Heart left ventricle (tissue), 16 donors: ENCODE measurements at regions of chr19 and their contacts with region 1.

Region 1: GRCh38 chr19:13861732-13862531 is 15.0 kb upstream of the NANOS3 start:
- DNase-seq: peak; percentile 94 to 96 (median 95)
- ATAC-seq: peak; percentile 93 to 95 (median 94)
- H3K4me3 ChIP-seq: peak overlapping the region in 11 of 12 donors; percentile 23 to 64 (median 50)
- H3K27ac ChIP-seq: peak overlapping the region; percentile 81 to 97 (median 94)
- H3K4me1 ChIP-seq: peaks cover 0 to 36% (median 20%) of the 10 kb centered on the region in 12 donors
- H3K27me3 ChIP-seq: peaks cover 0 to 15% (median 0%) of the 10 kb centered on the region in 9 donors
- CTCF ChIP-seq: peak; percentile 95 to 100 (median 98)
- POLR2A ChIP-seq: peak in 1 of 2 donors; percentile 49

Region 2: GRCh38 chr19:13277104-13277809 is 584.7 kb before region 1 on chr19:
- intact Hi-C with region 1: loop called in 2 of 10 experiments (anchors 5 to 10 kb)
- DNase-seq: peak in 3 of 5 donors; percentile 46 to 50 (median 49)
- ATAC-seq: peak; percentile 79 to 96 (median 90)
- H3K4me3 ChIP-seq: peak overlapping the region in 1 of 12 donors; percentile 15
- H3K27ac ChIP-seq: peak overlapping the region in 1 of 12 donors; percentile 52
- H3K4me1 ChIP-seq: peaks cover 0 to 9% (median 0%) of the 10 kb centered on the region in 12 donors
- H3K27me3 ChIP-seq: peaks cover 0 to 13% (median 0%) of the 10 kb centered on the region in 9 donors
- CTCF ChIP-seq: peak; percentile 55 to 75 (median 68)
- POLR2A ChIP-seq: no peak

Region 3: DNA sequence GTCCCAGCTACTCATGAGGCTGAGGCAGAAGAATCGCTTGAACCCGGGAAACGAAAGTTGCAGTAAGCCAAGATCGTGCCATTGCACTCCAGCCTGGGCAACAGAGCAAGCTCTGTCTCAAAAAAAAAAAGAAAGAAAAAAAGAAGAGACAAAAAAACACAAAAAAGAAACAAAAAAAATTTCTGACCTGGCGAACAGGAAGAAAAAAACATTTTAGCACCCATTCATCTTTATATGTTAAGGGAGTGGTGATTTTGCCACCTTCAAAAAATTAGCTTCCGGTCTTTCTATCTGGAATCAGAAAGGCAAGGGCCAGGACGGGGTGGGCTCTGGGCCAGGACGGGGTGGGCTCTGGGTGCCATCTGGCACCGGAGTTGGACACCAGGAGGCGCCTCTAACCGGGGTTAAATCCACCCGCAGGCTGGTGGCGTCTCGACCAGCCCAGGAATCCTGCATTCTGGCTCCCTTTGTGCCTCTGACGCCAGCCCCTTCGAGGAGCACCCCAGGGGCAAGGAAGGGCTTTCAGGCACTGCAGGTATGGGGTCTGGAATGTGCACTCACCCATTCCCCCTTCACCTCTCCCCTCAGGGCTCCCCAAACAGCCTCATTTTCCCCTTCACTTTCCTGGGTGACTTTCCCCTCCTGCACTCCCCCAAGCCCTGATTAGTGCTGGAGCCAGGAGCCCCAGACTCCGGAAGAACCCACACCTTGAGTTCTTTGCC is 77.0 kb before region 1 on chr19:
- intact Hi-C with region 1: loop called in 9 of 10 experiments (anchors 1 to 5 kb)
- DNase-seq: peak; percentile 71 to 89 (median 77)
- ATAC-seq: peak; percentile 35 to 65 (median 52)
- H3K4me3 ChIP-seq: peak overlapping the region in 2 of 12 donors; percentile 0 to 2
- H3K27ac ChIP-seq: no peak overlapping the region
- H3K4me1 ChIP-seq: peaks cover 0 to 63% (median 23%) of the 10 kb centered on the region in 12 donors
- H3K27me3 ChIP-seq: no peaks in the 10 kb centered on the region
- CTCF ChIP-seq: peak; percentile 47 to 78 (median 65)
- POLR2A ChIP-seq: no peak

Region 4: DNA sequence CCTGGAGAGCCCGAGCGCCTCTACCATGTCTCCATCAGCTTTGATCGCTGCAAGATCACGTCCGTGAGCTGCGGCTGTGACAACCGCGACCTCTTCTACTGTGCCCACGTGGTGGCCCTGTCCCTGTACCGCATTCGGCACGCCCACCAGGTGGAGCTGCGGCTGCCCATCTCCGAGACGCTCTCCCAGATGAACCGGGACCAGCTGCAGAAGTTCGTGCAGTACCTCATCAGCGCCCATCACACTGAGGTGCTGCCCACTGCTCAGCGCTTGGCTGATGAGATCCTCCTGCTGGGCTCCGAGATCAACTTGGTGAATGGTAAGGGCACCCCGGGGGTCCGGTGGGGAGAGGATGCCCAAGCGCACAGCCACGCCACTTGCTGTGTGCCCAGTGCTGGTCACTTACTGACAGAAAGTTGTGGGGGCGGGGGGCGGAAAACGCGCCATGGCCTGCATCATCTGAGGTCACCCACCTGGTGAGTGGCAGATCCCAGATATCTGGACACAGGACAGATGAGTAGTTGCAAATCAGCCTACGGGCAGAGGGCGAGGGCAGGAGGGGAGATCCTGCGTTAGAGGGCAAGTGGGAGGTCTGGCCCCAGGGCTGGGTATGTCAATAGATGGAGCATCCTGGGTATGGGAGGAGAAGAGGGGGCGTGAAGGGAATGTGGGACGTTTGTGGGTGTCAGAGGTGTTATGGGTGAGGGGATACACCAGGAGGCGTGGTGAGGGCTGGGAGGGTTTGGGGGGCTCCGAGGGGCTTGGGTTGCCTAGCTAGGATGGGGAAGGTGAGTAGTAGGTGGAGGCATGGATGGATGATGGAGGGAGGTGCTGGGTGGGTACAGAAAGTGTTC is 56.9 kb before region 1 on chr19:
- intact Hi-C with region 1: loop called in 2 of 10 experiments (anchors 1 to 5 kb)
- DNase-seq: peak in 2 of 5 donors; percentile 63 to 72
- ATAC-seq: peak; percentile 39 to 82 (median 68)
- H3K4me3 ChIP-seq: no peak overlapping the region
- H3K27ac ChIP-seq: no peak overlapping the region
- H3K4me1 ChIP-seq: peaks cover 0 to 3% (median 0%) of the 10 kb centered on the region in 12 donors
- H3K27me3 ChIP-seq: no peaks in the 10 kb centered on the region
- CTCF ChIP-seq: peak; percentile 16 to 64 (median 48)
- POLR2A ChIP-seq: no peak

Region 5: DNA sequence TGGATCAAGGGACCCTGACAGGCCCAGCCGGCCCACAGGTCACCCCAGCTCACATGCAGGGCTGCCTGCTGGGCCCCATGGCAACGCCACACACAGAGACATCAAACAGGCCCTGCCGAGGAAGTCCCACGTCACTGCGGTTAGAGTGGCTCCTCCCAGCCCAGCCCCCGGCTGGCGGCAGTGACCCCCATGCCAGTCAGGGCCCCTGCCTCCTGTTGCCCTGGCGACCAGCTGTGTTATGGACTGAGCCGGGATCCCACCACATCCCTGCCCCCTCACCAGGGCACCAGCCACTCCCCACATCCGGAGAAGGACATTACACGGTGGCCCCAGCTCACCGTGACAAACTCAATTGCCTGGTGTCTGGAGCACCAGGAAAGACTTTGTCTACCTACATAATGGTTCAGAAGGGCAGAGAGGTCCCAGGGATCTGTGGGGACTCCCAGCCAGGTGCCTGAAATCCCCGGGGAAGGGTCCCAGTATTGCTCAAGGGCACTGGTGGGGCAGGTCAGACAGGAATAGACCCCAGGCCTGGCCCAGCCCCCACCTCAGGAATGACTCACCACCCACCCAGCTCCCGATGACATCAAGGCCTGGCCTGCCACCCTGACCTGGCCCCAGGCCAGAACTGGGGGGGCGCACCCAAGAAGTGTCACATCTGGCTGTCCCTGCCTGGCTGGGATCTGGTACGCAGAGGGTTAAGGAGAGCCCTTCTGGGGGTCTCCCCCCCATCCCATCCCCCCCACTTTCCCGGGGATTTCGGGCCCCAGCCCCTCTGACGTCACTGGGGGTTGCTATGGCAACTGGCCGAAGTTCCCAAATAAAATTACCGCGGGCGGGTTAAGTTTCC is 15.2 kb before region 1 on chr19:
- intact Hi-C with region 1: loop called in 2 of 10 experiments (anchors 1 kb)
- DNase-seq: peak; percentile 92 to 96 (median 94)
- ATAC-seq: peak; percentile 62 to 76 (median 68)
- H3K4me3 ChIP-seq: peak overlapping the region; percentile 22 to 65 (median 58)
- H3K27ac ChIP-seq: peak overlapping the region; percentile 96 to 100 (median 100)
- H3K4me1 ChIP-seq: peaks cover 20 to 86% (median 67%) of the 10 kb centered on the region in 12 donors
- H3K27me3 ChIP-seq: no peaks in the 10 kb centered on the region
- CTCF ChIP-seq: no peak
- POLR2A ChIP-seq: peak in 1 of 2 donors; percentile 52

Region 6: GRCh38 chr19:13938301-13939064 is 76.6 kb after region 1 on chr19 and contains the start of gene PODNL1:
- intact Hi-C with region 1: no loop called
- DNase-seq: no peak
- ATAC-seq: peak in 3 of 4 donors; percentile 54 to 79 (median 58)
- H3K4me3 ChIP-seq: peak within 1 kb of the TSS in 7 of 12 donors; percentile 10 to 54 (median 36)
- H3K27ac ChIP-seq: no peak within 1 kb of the TSS
- H3K4me1 ChIP-seq: peaks cover 0 to 4% (median 0%) of the 10 kb centered on the region in 12 donors
- H3K27me3 ChIP-seq: peaks cover 0 to 27% (median 9%) of the 10 kb centered on the region in 9 donors
- CTCF ChIP-seq: no peak
- POLR2A ChIP-seq: no peak
- total RNA-seq, gene PODNL1: 0.36 to 6.3 (median 1.5) TPM in 8 of 9 donors, not detected in the other